ENCODE measurements at regions of chr9 and their contacts with region 1.

Region 1: GRCh38 chr9:2321523-2322151 is 299.9 kb upstream of the VLDLR start:
- DNase-seq: no peak
- H3K4me3 ChIP-seq: no peak overlapping the region
- H3K27ac ChIP-seq: no peak overlapping the region
- H3K4me1 ChIP-seq: no peaks in the 10 kb centered on the region
- H3K27me3 ChIP-seq: no peaks in the 10 kb centered on the region
- CTCF ChIP-seq: no peak
- EP300 ChIP-seq: no peak
- POLR2A ChIP-seq: no peak

Region 2: GRCh38 chr9:2389404-2389803 is 67.8 kb after region 1 on chr9:
- in situ Hi-C with region 1: loop called in 1 of 4 experiments (anchors 10 kb)
- intact Hi-C with region 1: no loop called
- DNase-seq: no peak
- H3K4me3 ChIP-seq: no peak overlapping the region
- H3K27ac ChIP-seq: no peak overlapping the region
- H3K4me1 ChIP-seq: no peaks in the 10 kb centered on the region
- H3K27me3 ChIP-seq: no peaks in the 10 kb centered on the region
- CTCF ChIP-seq: no peak
- EP300 ChIP-seq: no peak
- POLR2A ChIP-seq: no peak

Measured in transverse colon (tissue), 4 donors.